ENCODE measurements at regions of chr3 and their contacts with region 1.

Region 1: DNA sequence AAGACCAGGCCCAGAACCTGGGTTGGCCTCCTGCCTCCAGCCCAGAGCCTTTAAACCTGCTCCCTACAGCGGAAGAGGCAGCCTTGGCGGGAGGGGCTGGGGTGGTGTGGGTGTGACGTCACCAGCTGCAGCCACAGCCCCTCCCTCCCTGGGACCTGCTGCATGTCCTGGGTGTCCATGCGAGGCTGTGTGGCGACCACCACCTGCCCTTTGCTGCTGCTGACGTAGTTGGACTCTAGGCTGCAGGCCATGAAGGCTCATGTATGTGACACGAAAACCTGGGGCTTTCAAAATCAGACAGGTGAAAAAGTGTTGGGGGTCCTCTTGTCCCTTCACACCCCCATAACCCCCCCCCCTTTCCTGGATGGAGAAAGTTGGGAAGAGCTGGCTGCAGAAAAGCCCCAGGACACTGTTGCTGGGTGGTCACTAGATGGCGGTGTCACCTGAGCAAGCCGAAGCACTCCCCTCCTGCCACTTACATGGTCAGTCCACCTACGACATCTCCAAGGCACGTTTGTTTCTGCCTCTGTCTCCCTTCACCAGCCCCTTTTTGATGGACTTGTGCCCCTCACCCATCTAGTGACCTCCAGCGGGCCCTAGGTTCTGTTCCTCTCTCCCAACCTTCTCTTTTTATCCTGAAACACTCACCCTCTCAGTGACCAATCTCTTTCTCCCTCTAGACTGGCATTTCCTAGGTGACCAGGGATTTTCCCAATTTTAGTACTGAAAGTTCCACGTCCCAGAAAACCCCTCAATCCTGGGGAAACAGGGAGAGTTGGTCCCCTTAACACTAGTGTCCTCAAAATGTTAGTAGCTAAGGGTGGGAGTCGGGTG is 35.2 kb downstream of the SLC6A20 start:
- DNase-seq: peak; percentile 14 to 39 (median 39)
- H3K4me3 ChIP-seq: no peak overlapping the region
- H3K4me3 Mint-ChIP-seq: no peak overlapping the region
- H3K27ac ChIP-seq: no peak overlapping the region
- H3K27ac Mint-ChIP-seq: no peak overlapping the region
- H3K4me1 ChIP-seq: no peaks in the 10 kb centered on the region
- H3K4me1 Mint-ChIP-seq: peaks cover 3% of the 10 kb centered on the region
- H3K27me3 ChIP-seq: no peaks in the 10 kb centered on the region
- H3K27me3 Mint-ChIP-seq: peaks cover 0 to 2% (median 1%) of the 10 kb centered on the region in 3 donors
- CTCF ChIP-seq: peak; percentile 66

Region 2: DNA sequence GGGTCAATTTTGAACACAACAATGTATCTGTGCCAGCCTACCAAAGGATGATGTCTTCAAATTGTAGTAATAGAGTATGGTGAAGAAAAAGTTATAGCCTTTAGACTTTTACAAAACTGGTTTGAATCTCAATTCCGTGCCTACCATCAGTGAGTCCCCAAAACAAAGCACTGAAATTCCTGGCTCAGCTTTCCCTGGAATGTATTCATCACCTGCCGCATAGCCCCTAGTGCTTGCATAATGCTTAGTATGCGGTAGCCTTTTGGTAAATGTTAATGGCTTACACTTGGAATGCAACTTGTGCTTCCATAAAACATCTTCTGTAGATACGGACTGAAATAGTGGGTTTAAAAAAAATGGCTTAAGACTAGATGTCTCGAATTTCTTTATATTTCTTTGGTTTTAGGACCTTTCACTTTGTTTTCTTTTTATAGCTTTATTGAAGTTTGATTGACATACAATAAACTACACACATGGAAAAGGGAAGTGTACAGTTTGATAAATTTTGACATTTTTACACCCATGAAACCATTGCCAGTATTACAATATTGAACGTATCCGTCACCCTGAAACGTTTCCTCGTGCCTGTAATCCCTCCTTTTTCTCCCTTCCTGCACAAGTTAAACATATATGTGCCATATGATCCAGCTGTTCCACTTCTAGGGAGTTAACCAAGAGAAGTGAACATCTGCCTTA is 59.8 kb before region 1 on chr3:
- intact Hi-C with region 1: no loop called
- DNase-seq: no peak
- H3K4me3 ChIP-seq: no peak overlapping the region
- H3K4me3 Mint-ChIP-seq: no peak overlapping the region
- H3K27ac ChIP-seq: peak overlapping the region in 1 of 2 donors; percentile 6
- H3K27ac Mint-ChIP-seq: peak overlapping the region in 3 of 7 donors; percentile 6 to 61 (median 42)
- H3K4me1 ChIP-seq: no peaks in the 10 kb centered on the region
- H3K4me1 Mint-ChIP-seq: peaks cover 13% of the 10 kb centered on the region
- H3K27me3 ChIP-seq: no peaks in the 10 kb centered on the region
- H3K27me3 Mint-ChIP-seq: no peaks in the 10 kb centered on the region
- CTCF ChIP-seq: no peak

Region 3: GRCh38 chr3:46078712-46079400 is 317.8 kb after region 1 on chr3:
- intact Hi-C with region 1: loop called (anchors 5 kb)
- DNase-seq: peak; percentile 83 to 90 (median 89)
- H3K4me3 ChIP-seq: no peak overlapping the region
- H3K4me3 Mint-ChIP-seq: peak overlapping the region in 1 of 2 donors; percentile 76
- H3K27ac ChIP-seq: peak overlapping the region in 1 of 2 donors; percentile 12
- H3K27ac Mint-ChIP-seq: peak overlapping the region in 6 of 7 donors; percentile 11 to 65 (median 53)
- H3K4me1 ChIP-seq: peaks cover 3 to 7% of the 10 kb centered on the region in 2 donors
- H3K4me1 Mint-ChIP-seq: peaks cover 18% of the 10 kb centered on the region
- H3K27me3 ChIP-seq: no peaks in the 10 kb centered on the region
- H3K27me3 Mint-ChIP-seq: peaks cover 0 to 3% (median 0%) of the 10 kb centered on the region in 3 donors
- CTCF ChIP-seq: peak; percentile 99

Region 4: DNA sequence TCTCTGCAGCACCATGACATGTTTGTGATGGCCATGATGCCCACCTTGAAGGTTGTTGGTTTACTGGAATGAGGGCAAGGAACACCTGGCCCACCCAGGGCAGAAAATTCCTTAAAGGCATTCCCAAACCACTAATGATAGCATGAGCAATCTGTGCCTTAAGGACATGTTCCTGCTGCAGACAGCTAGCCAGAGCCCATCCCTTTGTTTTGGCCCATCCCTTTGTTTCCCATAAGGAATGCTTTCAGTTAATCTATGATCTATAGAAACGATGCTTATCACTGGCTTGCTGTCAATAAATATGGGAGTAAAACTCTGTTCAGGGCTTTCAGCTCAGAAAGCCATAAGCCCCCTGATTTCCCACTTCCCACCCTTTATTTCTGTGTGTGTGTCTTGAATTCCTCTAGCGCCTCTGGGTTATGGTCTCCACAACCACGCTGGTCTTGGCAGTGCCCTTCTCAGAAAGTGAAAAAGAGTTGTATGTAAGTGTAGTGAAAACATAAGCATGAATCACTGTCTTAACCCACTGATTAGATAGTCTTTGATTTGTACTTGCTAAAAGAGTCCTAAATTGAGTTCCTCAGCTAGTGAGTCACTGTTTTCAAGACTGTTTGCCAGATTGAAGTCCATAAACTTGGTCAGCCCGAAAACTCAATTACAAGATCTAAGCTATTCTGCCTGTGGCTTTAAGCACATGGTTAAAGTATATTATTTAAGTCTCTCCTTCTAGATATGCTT is 573.8 kb after region 1 on chr3:
- intact Hi-C with region 1: no loop called
- DNase-seq: no peak
- H3K4me3 ChIP-seq: no peak overlapping the region
- H3K4me3 Mint-ChIP-seq: no peak overlapping the region
- H3K27ac ChIP-seq: no peak overlapping the region
- H3K27ac Mint-ChIP-seq: no peak overlapping the region
- H3K4me1 ChIP-seq: peaks cover 16 to 27% of the 10 kb centered on the region in 2 donors
- H3K4me1 Mint-ChIP-seq: peaks cover 34% of the 10 kb centered on the region
- H3K27me3 ChIP-seq: no peaks in the 10 kb centered on the region
- H3K27me3 Mint-ChIP-seq: peaks cover 1 to 2% (median 2%) of the 10 kb centered on the region in 3 donors
- CTCF ChIP-seq: no peak

Measured in CD14-positive monocyte (primary cell).